ENCODE measurements at regions of chr21 and their contacts with region 1.

Region 1: GRCh38 chr21:26842976-26843932 is 2.0 kb downstream of the ADAMTS1 start:
- DNase-seq: peak in 1 of 2 experiments; percentile 81
- H3K4me3 ChIP-seq: peak overlapping the region; percentile 68 to 89 (median 74)
- H3K27ac ChIP-seq: no peak overlapping the region
- H3K4me1 ChIP-seq: peaks cover 0 to 12% (median 7%) of the 10 kb centered on the region in 4 experiments; a peak in 4 of 7 replicates
- H3K27me3 ChIP-seq: peaks cover 0 to 28% (median 13%) of the 10 kb centered on the region in 4 experiments; a peak in 5 of 7 replicates
- CTCF ChIP-seq: peak; percentile 14 to 45 (median 28); a peak in 3 of 4 replicates
- EP300 ChIP-seq: no peak
- POLR2A ChIP-seq: peak; percentile 71 to 83
- RAD21 ChIP-seq: peak in 1 of 2 experiments; percentile 1; a peak in 1 of 4 replicates

Region 2: DNA sequence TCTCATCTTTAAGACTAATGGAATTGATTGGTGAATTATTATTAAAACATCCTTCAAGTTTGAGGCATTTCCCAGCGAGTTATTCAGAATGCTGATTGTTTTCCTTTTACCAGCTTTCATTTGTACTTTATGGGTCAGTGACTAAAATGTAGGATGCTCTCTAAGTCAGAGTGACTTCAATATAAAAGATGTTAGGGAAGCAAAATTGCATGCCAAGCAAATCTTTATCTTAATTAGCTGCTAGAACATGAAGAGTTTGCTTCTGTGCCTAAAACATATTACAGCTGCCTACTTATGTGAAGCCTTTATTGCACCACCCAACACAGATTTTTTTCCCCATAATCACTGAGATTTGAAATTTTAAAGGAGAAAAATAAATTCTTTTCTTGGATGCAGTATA is 190.4 kb before region 1 on chr21:
- CTCF ChIA-PET with region 1: no interaction called
- POLR2A ChIA-PET with region 1: no interaction called
- DNase-seq: no peak
- H3K4me3 ChIP-seq: no peak overlapping the region
- H3K27ac ChIP-seq: no peak overlapping the region
- H3K4me1 ChIP-seq: no peaks in the 10 kb centered on the region
- H3K27me3 ChIP-seq: no peaks in the 10 kb centered on the region
- CTCF ChIP-seq: no peak
- EP300 ChIP-seq: no peak
- POLR2A ChIP-seq: no peak
- RAD21 ChIP-seq: no peak

Region 3: GRCh38 chr21:26776310-26777021 is 66.8 kb before region 1 on chr21:
- CTCF ChIA-PET with region 1: no interaction called
- POLR2A ChIA-PET with region 1: no interaction called
- DNase-seq: no peak
- H3K4me3 ChIP-seq: no peak overlapping the region
- H3K27ac ChIP-seq: no peak overlapping the region
- H3K4me1 ChIP-seq: no peaks in the 10 kb centered on the region
- H3K27me3 ChIP-seq: no peaks in the 10 kb centered on the region
- CTCF ChIP-seq: no peak
- EP300 ChIP-seq: no peak
- POLR2A ChIP-seq: no peak
- RAD21 ChIP-seq: no peak

Region 4: DNA sequence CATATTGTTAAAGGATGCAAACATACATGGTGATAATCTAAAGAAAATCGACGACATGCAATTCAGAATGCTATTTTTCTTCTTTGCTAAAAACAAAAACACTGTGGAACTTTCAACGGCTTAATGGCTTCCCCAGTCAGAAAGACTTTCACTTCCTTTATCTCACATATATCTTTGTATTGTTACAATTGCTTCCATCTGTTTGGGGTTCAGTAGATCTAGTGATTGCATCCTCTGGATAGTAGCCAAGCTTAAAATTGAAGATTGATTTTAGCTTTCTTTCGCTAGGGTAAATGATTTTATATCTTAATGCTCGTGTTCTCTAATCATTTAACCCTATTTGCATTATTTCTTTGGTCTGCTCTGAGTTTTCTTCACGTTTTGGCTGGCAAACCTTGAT is 33.8 kb after region 1 on chr21:
- CTCF ChIA-PET with region 1: no interaction called
- POLR2A ChIA-PET with region 1: no interaction called
- DNase-seq: no peak
- H3K4me3 ChIP-seq: no peak overlapping the region
- H3K27ac ChIP-seq: no peak overlapping the region
- H3K4me1 ChIP-seq: no peaks in the 10 kb centered on the region
- H3K27me3 ChIP-seq: no peaks in the 10 kb centered on the region
- CTCF ChIP-seq: no peak
- EP300 ChIP-seq: no peak
- POLR2A ChIP-seq: no peak
- RAD21 ChIP-seq: no peak

Region 5: DNA sequence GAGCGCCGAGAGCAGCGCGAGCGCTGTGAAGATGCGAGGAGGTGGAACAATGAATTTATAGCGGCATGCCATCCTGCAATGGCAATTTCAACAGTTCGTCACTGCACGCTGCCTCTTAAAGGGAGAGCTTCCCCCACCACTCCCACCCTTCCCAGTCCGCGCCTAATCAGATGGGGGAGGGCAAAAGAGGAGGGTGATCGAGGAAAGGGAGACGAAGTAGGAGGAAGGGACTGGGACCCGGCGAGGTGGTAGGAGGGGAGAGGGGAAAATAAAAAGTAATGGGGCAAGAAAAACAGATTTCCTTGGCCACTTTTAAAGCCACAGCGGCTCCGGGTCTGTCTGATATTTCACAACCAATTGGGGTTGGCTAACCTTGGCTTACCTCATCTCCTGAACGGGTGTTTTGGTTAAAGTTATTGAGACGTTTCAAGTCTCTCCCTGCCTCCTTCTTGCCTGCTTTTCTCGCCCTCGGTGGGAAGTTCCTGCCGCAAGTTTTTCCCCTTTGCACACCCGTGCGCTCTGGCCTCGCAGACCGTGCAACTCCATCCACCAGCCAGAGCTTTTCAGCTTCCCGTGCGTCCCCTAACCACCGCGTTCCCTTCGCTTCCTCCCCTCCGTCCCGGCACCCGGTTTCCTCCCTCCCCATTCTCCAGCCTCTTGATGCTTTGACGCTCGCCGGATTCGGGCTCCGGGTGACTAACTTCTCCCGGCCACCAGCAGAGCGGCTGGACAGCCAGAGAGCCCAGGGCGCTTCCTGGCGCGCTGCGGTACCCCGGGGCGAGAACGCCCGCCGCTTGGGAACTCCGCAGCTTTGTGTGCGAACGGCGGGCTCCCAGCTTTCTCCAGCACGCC is 124.0 kb after region 1 on chr21 and contains the start of gene ADAMTS5:
- CTCF ChIA-PET with region 1: interaction called, 10 read pairs
- POLR2A ChIA-PET with region 1: interaction called, 6 read pairs
- DNase-seq: peak in 1 of 2 experiments; percentile 69
- H3K4me3 ChIP-seq: peak within 1 kb of the TSS; percentile 41 to 75 (median 72)
- H3K27ac ChIP-seq: no peak within 1 kb of the TSS
- H3K4me1 ChIP-seq: peaks cover 4 to 9% (median 9%) of the 10 kb centered on the region in 4 experiments; a peak in 6 of 7 replicates
- H3K27me3 ChIP-seq: peaks cover 0 to 43% (median 32%) of the 10 kb centered on the region in 4 experiments; a peak in 6 of 7 replicates
- CTCF ChIP-seq: no peak
- EP300 ChIP-seq: no peak
- POLR2A ChIP-seq: no peak
- RAD21 ChIP-seq: no peak; a peak in 1 of 4 replicates
- total RNA-seq, gene ADAMTS5: 0.82 and 1.1 TPM in 2 replicates